ENCODE measurements at regions of chr1 and their contacts with region 1.

Region 1: DNA sequence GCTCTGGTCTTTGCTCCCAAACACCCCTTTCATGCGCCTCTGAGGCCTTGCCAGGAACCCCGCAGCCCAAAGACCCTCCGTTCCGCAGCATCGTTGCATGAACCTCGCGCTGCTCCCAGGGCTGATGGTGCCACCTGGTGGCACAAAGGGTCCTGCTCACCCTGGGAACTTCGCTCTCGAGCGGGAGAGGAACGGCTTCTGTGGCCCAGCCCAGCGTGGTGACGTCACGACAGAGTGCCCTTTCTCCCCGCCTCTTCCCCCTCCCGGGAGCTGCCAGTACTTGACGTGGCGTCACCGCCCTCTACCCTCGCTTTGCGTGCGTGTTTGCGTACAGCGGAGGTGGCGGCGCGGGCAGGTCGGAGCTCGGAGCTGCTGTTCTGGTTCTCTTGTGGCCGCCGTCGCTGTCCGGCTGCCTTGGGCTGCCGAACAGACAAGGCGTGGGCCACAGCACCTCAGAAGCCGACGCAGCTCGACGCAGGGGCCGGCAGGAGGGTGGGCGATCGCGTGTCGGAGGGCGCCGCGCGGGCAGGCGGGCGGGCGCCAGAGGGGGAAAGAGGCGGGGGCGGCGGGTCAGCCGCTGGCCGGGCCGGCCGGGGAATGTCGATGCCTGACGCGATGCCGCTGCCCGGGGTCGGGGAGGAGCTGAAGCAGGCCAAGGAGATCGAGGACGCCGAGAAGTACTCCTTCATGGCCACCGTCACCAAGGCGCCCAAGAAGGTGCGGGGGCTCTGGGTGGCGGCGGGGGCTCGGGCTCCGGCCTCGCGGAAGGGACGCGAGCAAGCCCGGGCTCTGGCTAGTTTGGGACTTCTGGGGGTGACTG is at the start of gene AHCYL1:
- DNase-seq: peak; percentile 99
- H3K4me3 ChIP-seq: peak within 1 kb of the TSS; percentile 99
- H3K27ac ChIP-seq: no peak within 1 kb of the TSS
- H3K4me1 ChIP-seq: peaks cover 29% of the 10 kb centered on the region
- CTCF ChIP-seq: peak; percentile 90
- total RNA-seq, gene AHCYL1: 18.5 and 20.5 TPM in 2 replicates

Region 2: GRCh38 chr1:109548321-109549267 is 436.1 kb before region 1 on chr1 and contains the start of gene GNAI3:
- CTCF ChIA-PET with region 1: interaction called, 6 read pairs
- POLR2A ChIA-PET with region 1: interaction called, 3 read pairs
- intact Hi-C with region 1: loop called (anchors 1 kb)
- DNase-seq: peak; percentile 97
- H3K4me3 ChIP-seq: peak within 1 kb of the TSS; percentile 85
- H3K27ac ChIP-seq: peak within 1 kb of the TSS; percentile 79
- H3K4me1 ChIP-seq: peaks cover 25% of the 10 kb centered on the region
- CTCF ChIP-seq: no peak; the same call in 1 of the 2 replicates
- total RNA-seq, gene GNAI3: 3.8 and 4.1 TPM in 2 replicates

Region 3: DNA sequence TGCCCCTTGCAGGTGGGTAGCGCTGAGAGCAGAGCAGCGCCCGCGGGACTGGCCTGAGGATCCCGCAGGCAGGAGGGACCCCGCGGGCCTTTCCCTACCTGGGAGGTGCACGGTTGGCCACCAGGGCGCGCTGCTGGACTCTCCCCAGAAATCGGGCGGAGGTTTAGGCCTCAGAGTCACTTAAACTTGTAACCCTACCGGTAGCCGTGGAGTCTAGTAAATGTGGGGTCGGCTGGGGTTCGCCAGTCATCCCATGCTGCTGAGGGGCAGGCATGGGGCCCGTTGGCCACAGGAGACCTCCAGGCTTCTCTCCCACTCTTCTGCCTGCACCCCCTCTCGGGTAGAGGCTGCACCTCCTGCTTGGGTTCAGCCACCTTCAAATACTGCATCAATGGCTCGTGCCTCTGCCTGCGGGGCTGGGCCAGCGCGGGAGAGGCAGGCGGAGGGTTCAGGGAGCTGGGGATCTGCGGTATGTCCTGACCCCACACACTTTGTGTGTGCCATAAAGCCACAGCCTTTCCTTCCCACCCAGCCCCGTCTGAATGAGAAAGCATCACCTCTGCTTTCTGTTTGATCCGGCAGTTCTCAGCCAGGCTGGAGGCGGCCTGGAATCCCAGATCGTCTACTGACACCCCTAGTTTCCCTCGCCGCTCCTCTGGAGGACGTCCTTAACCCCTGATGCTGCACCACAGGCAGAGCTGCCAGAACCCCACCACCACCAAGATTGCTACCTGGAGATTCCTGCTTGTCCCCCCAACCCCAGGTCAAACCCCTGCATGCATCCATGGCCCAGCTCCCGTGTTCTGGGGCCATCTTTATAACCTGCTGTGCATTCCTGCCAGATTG is 341.1 kb before region 1 on chr1:
- CTCF ChIA-PET with region 1: interaction called, 14 read pairs
- POLR2A ChIA-PET with region 1: no interaction called
- intact Hi-C with region 1: loop called (anchors 5 kb)
- DNase-seq: peak; percentile 85
- H3K4me3 ChIP-seq: no peak overlapping the region
- H3K27ac ChIP-seq: no peak overlapping the region
- H3K4me1 ChIP-seq: no peaks in the 10 kb centered on the region
- CTCF ChIP-seq: peak; percentile 89

Region 4: GRCh38 chr1:109773146-109773899 is 211.3 kb before region 1 on chr1:
- CTCF ChIA-PET with region 1: interaction called, 49 read pairs
- POLR2A ChIA-PET with region 1: interaction called, 3 read pairs
- intact Hi-C with region 1: loop called (anchors 1 kb)
- DNase-seq: peak; percentile 80
- H3K4me3 ChIP-seq: no peak overlapping the region
- H3K27ac ChIP-seq: no peak overlapping the region
- H3K4me1 ChIP-seq: no peaks in the 10 kb centered on the region
- CTCF ChIP-seq: peak; percentile 83

Region 5: GRCh38 chr1:109910963-109911798 is 73.5 kb before region 1 on chr1:
- CTCF ChIA-PET with region 1: no interaction called
- POLR2A ChIA-PET with region 1: no interaction called
- intact Hi-C with region 1: loop called (anchors 1 kb)
- DNase-seq: no peak
- H3K4me3 ChIP-seq: no peak overlapping the region
- H3K27ac ChIP-seq: no peak overlapping the region
- H3K4me1 ChIP-seq: peaks cover 4% of the 10 kb centered on the region
- CTCF ChIP-seq: no peak

Region 6: GRCh38 chr1:110011527-110012041 is 26.9 kb after region 1 on chr1:
- CTCF ChIA-PET with region 1: no interaction called
- POLR2A ChIA-PET with region 1: interaction called, 6 read pairs
- intact Hi-C with region 1: loop called (anchors 1 kb)
- DNase-seq: peak; percentile 75
- H3K4me3 ChIP-seq: no peak overlapping the region
- H3K27ac ChIP-seq: peak overlapping the region; percentile 50
- H3K4me1 ChIP-seq: peaks cover 19% of the 10 kb centered on the region
- CTCF ChIP-seq: peak; percentile 83

Measured in OCI-LY7 (cell line).